ENCODE measurements at regions of chr15 and their contacts with region 1.

Region 1: GRCh38 chr15:65856821-65857455 is 12.4 kb upstream of the RAB11A start:
- DNase-seq: peak; percentile 76
- H3K4me3 ChIP-seq: no peak overlapping the region
- H3K27ac ChIP-seq: no peak overlapping the region
- H3K4me1 ChIP-seq: no peaks in the 10 kb centered on the region
- H3K27me3 ChIP-seq: no peaks in the 10 kb centered on the region
- CTCF ChIP-seq: peak; percentile 92

Region 2: GRCh38 chr15:64912379-64913325 is 944.3 kb before region 1 on chr15:
- CTCF ChIA-PET with region 1: interaction called, 16 read pairs
- POLR2A ChIA-PET with region 1: no interaction called
- intact Hi-C with region 1: no loop called
- DNase-seq: no peak
- H3K4me3 ChIP-seq: peak overlapping the region; percentile 53
- H3K27ac ChIP-seq: no peak overlapping the region
- H3K4me1 ChIP-seq: peaks cover 11% of the 10 kb centered on the region
- H3K27me3 ChIP-seq: no peaks in the 10 kb centered on the region
- CTCF ChIP-seq: no peak

Region 3: GRCh38 chr15:65384895-65385858 is 471.8 kb before region 1 on chr15:
- CTCF ChIA-PET with region 1: no interaction called
- POLR2A ChIA-PET with region 1: no interaction called
- intact Hi-C with region 1: no loop called
- DNase-seq: peak; percentile 90
- H3K4me3 ChIP-seq: no peak overlapping the region
- H3K27ac ChIP-seq: no peak overlapping the region
- H3K4me1 ChIP-seq: peaks cover 9% of the 10 kb centered on the region
- H3K27me3 ChIP-seq: no peaks in the 10 kb centered on the region
- CTCF ChIP-seq: peak; percentile 91

Region 4: DNA sequence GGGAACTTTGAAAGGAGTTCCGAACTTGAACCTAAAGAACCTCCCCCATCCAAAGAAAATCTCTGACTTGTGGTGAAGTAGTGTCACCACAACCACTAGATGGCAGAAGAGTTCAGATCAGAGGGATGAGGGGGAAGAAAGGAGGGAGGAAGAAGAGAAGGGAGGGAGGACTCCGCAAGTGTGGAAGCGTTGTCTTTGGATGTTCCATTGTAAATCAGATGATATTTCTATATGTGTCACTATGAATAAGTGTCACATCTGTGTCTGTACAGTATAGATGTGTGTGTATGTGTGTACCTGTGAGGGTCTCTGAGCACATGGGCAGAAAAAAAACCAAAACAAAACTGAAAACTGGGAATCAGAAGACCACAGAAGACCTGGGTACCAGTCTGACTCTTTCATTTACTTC is 218.3 kb before region 1 on chr15:
- CTCF ChIA-PET with region 1: no interaction called
- POLR2A ChIA-PET with region 1: no interaction called
- intact Hi-C with region 1: loop called (anchors 5 kb)
- DNase-seq: peak; percentile 89
- H3K4me3 ChIP-seq: peak overlapping the region; percentile 9
- H3K27ac ChIP-seq: no peak overlapping the region
- H3K4me1 ChIP-seq: no peaks in the 10 kb centered on the region
- H3K27me3 ChIP-seq: no peaks in the 10 kb centered on the region
- CTCF ChIP-seq: peak; percentile 89